ENCODE measurements at regions of chr19 and their contacts with region 1.

Region 1: GRCh38 chr19:17579661-17580244 is 24.3 kb downstream of the COLGALT1 start:
- DNase-seq: no peak
- H3K4me3 Mint-ChIP-seq: no peak overlapping the region
- H3K27ac Mint-ChIP-seq: no peak overlapping the region
- H3K4me1 Mint-ChIP-seq: peaks cover 8% of the 10 kb centered on the region
- H3K27me3 Mint-ChIP-seq: no peaks in the 10 kb centered on the region

Region 2: DNA sequence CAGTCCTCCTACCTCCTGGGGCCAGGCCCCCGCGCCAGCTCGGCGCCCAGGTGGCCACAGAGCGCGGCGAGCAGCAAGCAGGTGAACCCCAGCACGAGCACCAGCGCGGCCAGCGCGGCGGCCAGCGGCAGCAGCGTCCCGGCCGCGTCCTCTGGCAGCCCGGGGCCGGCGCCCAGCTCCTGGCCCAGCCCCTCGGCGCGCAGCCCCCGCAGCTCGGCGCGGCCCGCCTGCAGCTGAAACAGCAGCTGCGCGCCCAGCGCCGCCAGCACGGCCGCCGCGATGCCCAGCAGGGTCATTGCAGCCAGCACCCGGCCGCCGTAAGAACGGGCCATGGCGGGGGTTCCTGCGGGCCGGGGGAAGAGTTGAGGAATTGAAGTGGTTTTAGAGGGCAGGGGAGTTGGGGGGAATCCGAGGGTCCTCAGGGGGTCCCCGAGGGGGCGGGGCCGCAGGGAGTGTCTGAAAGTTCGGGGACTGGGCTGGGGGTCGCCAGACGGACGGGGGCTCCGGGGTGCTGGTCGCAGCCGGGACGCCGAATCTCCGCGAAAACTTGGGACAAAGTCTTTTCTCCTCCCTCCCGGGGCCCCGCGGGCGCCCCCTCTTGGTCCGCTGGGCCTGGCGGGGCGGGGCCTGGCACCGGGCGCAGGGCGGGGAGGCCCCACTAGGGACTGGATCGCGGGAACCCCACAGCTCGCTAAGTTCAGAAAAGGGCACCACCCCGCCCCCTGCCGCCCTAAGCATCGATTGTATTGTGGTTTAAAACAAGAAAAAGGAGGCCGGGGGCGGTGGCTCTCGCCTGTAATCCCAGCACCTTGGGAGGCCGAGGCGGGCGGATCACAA is 131.4 kb before region 1 on chr19 and contains the start of gene TMEM221:
- intact Hi-C with region 1: loop called (anchors 1 kb)
- DNase-seq: peak; percentile 28
- H3K4me3 Mint-ChIP-seq: no peak within 1 kb of the TSS
- H3K27ac Mint-ChIP-seq: no peak within 1 kb of the TSS
- H3K4me1 Mint-ChIP-seq: peaks cover 13% of the 10 kb centered on the region
- H3K27me3 Mint-ChIP-seq: peaks cover 14% of the 10 kb centered on the region
- total RNA-seq, gene TMEM221: not detected in 2 replicates

Region 3: DNA sequence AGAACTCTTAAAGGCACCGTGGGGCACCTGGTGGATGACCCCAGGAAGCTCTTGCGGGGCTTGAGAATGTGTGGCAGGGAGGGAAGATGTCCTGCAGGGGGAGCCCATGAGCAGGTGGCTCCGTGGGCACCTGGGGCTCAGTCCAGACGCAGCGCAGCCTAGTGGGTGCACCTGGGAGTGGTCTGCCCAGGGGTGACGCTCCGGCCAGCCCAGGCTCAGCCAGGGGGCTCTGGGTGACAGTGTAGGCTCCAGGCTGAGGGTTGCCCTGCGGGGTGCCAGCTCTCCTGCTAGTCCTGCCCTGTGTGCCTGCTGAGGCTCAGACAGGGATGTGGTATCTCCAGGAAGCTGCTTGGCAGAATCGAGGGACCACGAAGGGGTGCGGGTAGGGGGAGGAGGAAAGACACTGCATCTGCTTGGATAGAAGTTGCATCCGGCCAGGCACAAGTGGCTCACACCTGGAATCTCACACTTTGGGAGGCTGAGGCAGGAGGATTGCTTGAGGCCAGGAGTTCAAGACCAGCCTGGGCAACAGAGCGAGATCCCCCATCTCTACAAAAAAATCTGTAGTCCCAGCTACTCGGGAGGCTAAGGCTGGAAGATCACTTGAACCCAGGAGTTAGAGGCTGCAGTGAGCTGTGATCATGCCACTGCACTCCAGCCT is 83.3 kb before region 1 on chr19:
- intact Hi-C with region 1: loop called (anchors 2 kb)
- DNase-seq: peak; percentile 74
- H3K4me3 Mint-ChIP-seq: no peak overlapping the region
- H3K27ac Mint-ChIP-seq: no peak overlapping the region
- H3K4me1 Mint-ChIP-seq: peaks cover 13% of the 10 kb centered on the region
- H3K27me3 Mint-ChIP-seq: no peaks in the 10 kb centered on the region

Region 4: DNA sequence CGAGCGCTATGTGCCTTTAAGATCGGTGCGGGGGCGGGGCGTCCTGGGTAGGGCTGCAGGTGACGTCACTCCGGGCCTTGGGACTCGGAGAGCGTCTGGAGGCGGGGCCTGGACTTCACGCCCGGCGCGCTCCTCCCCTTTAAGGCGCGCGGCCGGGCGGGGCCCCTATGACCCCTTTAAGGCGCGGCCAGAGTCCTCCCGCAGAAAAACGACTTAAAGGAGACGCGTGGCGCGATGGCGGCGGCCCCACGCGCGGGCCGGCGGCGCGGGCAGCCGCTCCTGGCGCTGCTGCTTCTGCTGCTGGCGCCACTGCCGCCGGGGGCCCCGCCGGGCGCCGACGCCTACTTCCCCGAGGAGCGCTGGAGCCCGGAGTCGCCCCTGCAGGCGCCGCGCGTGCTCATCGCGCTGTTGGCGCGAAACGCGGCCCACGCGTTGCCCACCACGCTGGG is 24.2 kb before region 1 on chr19 and contains the start of gene COLGALT1:
- intact Hi-C with region 1: loop called (anchors 1 kb)
- DNase-seq: peak; percentile 97
- H3K4me3 Mint-ChIP-seq: peak within 1 kb of the TSS; percentile 86
- H3K27ac Mint-ChIP-seq: peak within 1 kb of the TSS; percentile 70
- H3K4me1 Mint-ChIP-seq: peaks cover 15% of the 10 kb centered on the region
- H3K27me3 Mint-ChIP-seq: no peaks in the 10 kb centered on the region
- total RNA-seq, gene COLGALT1: 115 and 117 TPM in 2 replicates

Region 5: GRCh38 chr19:17616961-17617806 is 37.4 kb after region 1 on chr19:
- intact Hi-C with region 1: loop called (anchors 1 kb)
- DNase-seq: no peak
- H3K4me3 Mint-ChIP-seq: no peak overlapping the region
- H3K27ac Mint-ChIP-seq: no peak overlapping the region
- H3K4me1 Mint-ChIP-seq: no peaks in the 10 kb centered on the region
- H3K27me3 Mint-ChIP-seq: peaks cover 10% of the 10 kb centered on the region

Measured in activated T-helper 1 cell treated with anti-CD3 and anti-CD28 coated beads, Interleukin-12 subunit alpha, Interleukin-12 subunit beta, Interleukin-2, Interleukin-4 antibody, amounts not matched to agents 30 ng/mL and 10 ng/mL and 1 ng/mL, durations not matched to agents 14 hours and 24 hours and 36 hours (primary cell).